ENCODE measurements at regions of chr3 and their contacts with region 1.

Region 1: DNA sequence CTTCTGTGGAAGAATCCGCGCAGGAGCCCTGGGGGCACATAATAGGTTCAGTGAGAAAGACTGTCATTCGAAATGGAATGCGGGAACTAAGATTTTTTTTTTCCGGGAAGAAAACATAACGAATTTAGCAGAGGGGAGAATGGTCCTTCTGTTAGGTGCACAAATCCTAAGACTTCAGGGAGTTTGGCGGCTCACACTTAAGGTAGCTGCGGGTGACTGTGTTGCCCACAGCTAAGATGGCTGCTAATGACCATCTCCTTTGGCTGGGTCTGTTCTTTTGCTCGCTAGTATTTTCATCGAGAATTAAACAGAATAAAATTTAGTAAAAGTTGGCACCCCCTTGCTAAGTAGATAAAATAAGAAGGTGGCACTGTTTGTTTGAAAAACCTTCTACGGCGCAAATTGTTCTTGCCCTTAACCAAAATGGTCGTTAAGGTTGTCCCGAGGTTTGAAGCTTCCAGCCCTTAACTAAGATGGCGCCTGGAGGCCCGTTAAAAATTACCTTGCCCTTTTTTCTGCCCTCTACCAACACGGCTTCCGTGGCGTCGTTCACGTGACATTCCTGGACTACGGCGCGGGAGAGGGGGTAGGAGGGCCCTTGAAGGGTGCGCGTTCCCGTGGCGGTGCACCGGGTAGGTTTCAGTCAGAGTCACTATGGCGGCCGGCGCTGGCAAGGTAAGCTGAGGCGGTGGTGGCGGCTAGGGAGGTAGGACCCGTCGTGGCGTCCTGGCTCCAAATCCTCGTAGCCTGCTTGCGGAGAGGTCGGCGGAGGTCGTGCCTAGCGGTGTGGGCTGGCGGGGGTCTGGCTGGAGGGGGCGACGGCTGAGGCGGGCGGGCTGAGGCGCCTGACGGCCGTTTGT is at the start of gene SLMAP:
- DNase-seq: peak; percentile 94
- ATAC-seq: peak; percentile 92
- H3K4me3 Mint-ChIP-seq: peak within 1 kb of the TSS; percentile 84
- H3K27ac Mint-ChIP-seq: peak within 1 kb of the TSS; percentile 93
- H3K4me1 Mint-ChIP-seq: peaks cover 30% of the 10 kb centered on the region
- H3K27me3 Mint-ChIP-seq: no peaks in the 10 kb centered on the region
- CTCF ChIP-seq: no peak
- total RNA-seq, gene SLMAP: 75.5 to 79.5 TPM (median 78.3 TPM) in 3 replicates

Region 2: GRCh38 chr3:57597122-57597923 is 158.6 kb before region 1 on chr3 and contains the start of gene ARF4:
- CTCF ChIA-PET with region 1: no interaction called
- POLR2A ChIA-PET with region 1: interaction called, 20 read pairs
- DNase-seq: peak; percentile 99
- ATAC-seq: peak; percentile 96
- H3K4me3 Mint-ChIP-seq: peak within 1 kb of the TSS; percentile 99
- H3K27ac Mint-ChIP-seq: peak within 1 kb of the TSS; percentile 100
- H3K4me1 Mint-ChIP-seq: peaks cover 23% of the 10 kb centered on the region
- H3K27me3 Mint-ChIP-seq: no peaks in the 10 kb centered on the region
- CTCF ChIP-seq: no peak
- total RNA-seq, gene ARF4: 117 to 118 TPM (median 117 TPM) in 3 replicates

Region 3: DNA sequence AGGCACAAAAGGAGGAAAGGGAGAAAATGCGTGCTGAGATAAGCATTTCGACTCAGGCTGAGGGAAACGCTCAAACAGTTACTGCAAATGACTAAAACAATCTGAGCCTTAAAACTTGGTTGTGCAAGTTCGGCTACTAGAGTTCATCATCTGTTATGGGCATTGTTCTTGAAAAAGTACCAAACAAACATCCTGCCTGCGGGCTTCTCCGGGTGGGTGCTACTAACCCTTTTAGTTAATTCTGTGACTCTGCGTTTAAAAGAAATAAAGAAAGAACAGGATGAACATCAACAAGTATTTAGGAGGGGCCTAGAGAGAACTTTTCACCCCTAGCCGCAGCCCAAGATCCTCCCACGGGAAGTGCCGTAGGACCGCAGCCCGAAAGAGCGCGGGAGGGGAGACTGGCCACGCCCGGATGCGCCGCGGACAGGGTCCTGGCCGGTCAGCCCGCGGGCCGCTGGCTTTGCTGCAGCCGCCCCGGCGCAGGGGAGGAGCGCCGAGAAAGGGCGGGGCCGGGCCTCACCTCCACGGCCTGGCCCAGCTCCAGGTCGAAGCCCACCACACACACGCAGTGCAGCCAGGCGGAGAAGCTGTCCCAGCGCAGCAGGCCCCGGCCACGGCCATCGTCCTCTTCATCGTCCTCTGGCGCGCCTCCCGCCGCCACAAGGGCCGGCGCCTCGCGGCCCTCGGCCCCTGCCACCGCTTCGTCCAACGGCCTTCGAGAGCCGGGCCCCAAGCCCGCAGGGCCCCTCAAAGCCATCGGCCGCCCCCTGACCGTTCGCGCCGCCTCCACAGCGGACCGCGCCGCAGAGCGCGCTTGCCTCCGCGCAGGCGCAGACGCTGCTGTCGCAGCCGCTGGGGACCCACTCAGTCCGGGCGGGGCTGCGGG is 63.4 kb before region 1 on chr3 and contains the start of gene DENND6A:
- CTCF ChIA-PET with region 1: no interaction called
- POLR2A ChIA-PET with region 1: interaction called, 13 read pairs
- DNase-seq: peak; percentile 90
- ATAC-seq: peak; percentile 94
- H3K4me3 Mint-ChIP-seq: peak within 1 kb of the TSS; percentile 88
- H3K27ac Mint-ChIP-seq: peak within 1 kb of the TSS; percentile 95
- H3K4me1 Mint-ChIP-seq: peaks cover 16% of the 10 kb centered on the region
- H3K27me3 Mint-ChIP-seq: no peaks in the 10 kb centered on the region
- CTCF ChIP-seq: no peak
- total RNA-seq, gene DENND6A: 12.4 to 15.1 TPM (median 13.9 TPM) in 3 replicates

Measured in WTC11 (cell line).